ENCODE measurements at regions of chr9 and their contacts with region 1.

Region 1: DNA sequence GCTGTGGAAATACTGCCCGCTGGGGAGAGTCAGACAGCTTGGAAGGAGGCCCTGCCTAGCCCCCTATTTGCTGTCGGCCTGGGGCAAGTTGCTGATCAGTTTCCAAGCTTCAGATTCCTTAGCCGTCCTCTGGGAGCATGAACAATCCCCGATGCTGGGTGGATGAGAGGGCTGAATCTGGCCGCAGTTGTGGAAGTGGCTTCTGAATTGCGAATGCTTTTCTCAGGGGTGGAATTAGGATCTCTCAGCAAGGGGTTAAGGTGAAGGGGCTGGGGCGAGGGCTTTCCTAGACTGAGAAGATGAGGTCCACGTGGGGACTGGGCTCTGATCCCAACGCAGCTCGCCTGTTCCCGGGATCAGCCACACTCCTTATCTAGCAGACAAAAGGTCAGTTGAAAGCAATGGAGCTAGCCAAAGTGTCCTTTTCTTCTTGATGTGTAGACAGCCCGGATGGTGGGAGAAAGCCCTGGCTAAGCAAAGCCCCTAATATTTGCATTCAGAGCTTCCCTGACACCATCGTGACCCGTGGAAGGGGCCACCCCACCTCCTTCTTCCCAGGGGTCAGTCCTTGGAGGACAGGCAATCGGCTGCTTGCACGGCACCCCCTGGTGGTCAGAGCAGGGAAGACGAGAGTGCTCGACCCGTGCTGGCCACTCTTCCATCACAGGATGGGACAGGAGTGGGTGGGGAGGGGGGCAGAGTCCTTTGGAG is 54.9 kb downstream of the COL15A1 start:
- DNase-seq: peak; percentile 90
- H3K4me3 Mint-ChIP-seq: no peak overlapping the region
- H3K27ac Mint-ChIP-seq: no peak overlapping the region
- H3K4me1 Mint-ChIP-seq: peaks cover 38% of the 10 kb centered on the region
- H3K27me3 Mint-ChIP-seq: peaks cover 24% of the 10 kb centered on the region

Region 2: GRCh38 chr9:98515506-98516204 is 482.9 kb before region 1 on chr9:
- intact Hi-C with region 1: no loop called
- DNase-seq: peak; percentile 21
- H3K4me3 Mint-ChIP-seq: no peak overlapping the region
- H3K27ac Mint-ChIP-seq: no peak overlapping the region
- H3K4me1 Mint-ChIP-seq: no peaks in the 10 kb centered on the region
- H3K27me3 Mint-ChIP-seq: peaks cover 2% of the 10 kb centered on the region

Region 3: GRCh38 chr9:98807070-98807810 is 191.4 kb before region 1 on chr9 and contains the start of gene GALNT12:
- intact Hi-C with region 1: loop called (anchors 2 kb)
- DNase-seq: peak; percentile 85
- H3K4me3 Mint-ChIP-seq: peak within 1 kb of the TSS; percentile 85
- H3K27ac Mint-ChIP-seq: peak within 1 kb of the TSS; percentile 43
- H3K4me1 Mint-ChIP-seq: peaks cover 24% of the 10 kb centered on the region
- H3K27me3 Mint-ChIP-seq: peaks cover 47% of the 10 kb centered on the region
- total RNA-seq, gene GALNT12: 2.8 and 3.6 TPM in 2 replicates

Region 4: DNA sequence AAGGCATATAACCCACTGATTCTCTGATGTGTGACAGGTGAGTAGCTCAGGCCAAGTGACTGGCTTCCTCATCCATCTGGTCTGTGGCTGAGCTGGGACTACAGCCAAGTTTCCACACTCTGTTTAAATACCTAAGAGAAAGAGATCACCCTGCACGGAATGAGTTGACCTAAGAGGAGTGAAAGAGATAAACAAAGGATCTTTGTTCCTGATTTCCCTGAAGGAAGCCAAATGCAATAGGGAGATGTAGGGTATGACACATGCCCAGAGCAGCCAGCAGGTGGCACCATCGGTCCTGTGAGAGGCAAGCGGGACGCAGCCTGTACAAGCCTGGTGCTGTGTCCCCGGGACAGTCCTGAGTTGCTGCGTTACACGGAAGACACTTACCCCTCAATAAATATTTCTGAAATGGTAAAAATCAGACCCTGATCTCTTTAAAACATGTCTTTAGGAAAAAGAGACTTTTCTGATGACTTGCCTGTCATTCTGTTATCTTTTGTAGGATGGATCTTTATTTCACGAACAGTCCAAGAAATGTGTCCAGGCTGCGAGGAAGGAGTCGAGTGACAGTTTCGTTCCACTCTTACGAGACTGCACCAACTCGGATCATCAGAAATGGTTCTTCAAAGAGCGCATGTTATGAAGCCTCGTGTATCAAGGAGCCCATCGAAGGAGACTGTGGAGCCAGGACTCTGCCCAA is 150.0 kb before region 1 on chr9:
- intact Hi-C with region 1: loop called (anchors 10 kb)
- DNase-seq: peak; percentile 92
- H3K4me3 Mint-ChIP-seq: no peak overlapping the region
- H3K27ac Mint-ChIP-seq: no peak overlapping the region
- H3K4me1 Mint-ChIP-seq: peaks cover 15% of the 10 kb centered on the region
- H3K27me3 Mint-ChIP-seq: no peaks in the 10 kb centered on the region

Region 5: DNA sequence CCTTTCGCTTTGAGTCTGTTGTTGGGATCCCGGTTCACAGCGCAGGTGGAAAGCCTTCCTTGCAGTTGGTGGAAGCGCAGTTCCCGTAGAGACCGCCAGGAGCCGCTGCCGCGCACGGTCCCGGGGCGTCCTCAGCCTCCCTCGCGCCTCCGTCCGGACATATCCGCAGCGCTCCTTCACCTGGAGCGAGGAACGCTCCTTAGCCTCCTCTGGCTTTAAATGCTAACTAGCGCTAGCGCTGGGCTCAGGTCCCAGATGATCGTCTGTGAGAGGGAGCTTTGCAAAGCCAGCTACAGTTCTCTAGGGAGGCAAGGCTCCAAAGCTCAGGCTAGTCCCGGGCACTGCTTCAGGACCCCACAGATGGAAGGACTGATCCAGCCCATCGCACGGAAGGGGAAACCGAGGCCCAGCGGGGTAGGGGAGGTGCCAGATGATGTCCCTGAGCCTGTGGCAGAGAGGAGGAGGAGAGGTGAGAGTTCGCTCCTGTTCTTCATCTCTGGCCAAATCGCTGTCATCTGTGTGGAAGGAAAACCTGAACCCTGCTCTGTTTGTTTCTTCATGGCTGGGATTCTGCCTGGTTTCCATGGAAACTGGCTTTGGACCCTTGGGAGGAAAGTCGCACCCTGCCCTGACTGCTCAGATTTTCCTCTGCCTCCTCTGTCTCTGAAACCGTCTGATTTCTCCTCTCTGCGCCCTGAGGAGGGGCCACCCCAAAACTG is 23.4 kb before region 1 on chr9:
- intact Hi-C with region 1: loop called (anchors 2 kb)
- DNase-seq: peak; percentile 95
- H3K4me3 Mint-ChIP-seq: peak overlapping the region; percentile 58
- H3K27ac Mint-ChIP-seq: no peak overlapping the region
- H3K4me1 Mint-ChIP-seq: peaks cover 10% of the 10 kb centered on the region
- H3K27me3 Mint-ChIP-seq: peaks cover 38% of the 10 kb centered on the region

Region 6: GRCh38 chr9:99104459-99105151 is 106.0 kb after region 1 on chr9 and contains the start of gene TGFBR1:
- intact Hi-C with region 1: loop called (anchors 1 kb)
- DNase-seq: peak; percentile 99
- H3K4me3 Mint-ChIP-seq: peak within 1 kb of the TSS; percentile 90
- H3K27ac Mint-ChIP-seq: peak within 1 kb of the TSS; percentile 84
- H3K4me1 Mint-ChIP-seq: peaks cover 53% of the 10 kb centered on the region
- H3K27me3 Mint-ChIP-seq: no peaks in the 10 kb centered on the region
- total RNA-seq, gene TGFBR1: 29.7 and 35.3 TPM in 2 replicates

Region 7: GRCh38 chr9:99140685-99141314 is 142.2 kb after region 1 on chr9:
- intact Hi-C with region 1: loop called (anchors 1 kb)
- DNase-seq: peak; percentile 81
- H3K4me3 Mint-ChIP-seq: no peak overlapping the region
- H3K27ac Mint-ChIP-seq: no peak overlapping the region
- H3K4me1 Mint-ChIP-seq: peaks cover 41% of the 10 kb centered on the region
- H3K27me3 Mint-ChIP-seq: no peaks in the 10 kb centered on the region